Posterior cingulate gyrus (tissue), 11 donors: ENCODE measurements at regions of chr9 and their contacts with region 1.

Region 1: DNA sequence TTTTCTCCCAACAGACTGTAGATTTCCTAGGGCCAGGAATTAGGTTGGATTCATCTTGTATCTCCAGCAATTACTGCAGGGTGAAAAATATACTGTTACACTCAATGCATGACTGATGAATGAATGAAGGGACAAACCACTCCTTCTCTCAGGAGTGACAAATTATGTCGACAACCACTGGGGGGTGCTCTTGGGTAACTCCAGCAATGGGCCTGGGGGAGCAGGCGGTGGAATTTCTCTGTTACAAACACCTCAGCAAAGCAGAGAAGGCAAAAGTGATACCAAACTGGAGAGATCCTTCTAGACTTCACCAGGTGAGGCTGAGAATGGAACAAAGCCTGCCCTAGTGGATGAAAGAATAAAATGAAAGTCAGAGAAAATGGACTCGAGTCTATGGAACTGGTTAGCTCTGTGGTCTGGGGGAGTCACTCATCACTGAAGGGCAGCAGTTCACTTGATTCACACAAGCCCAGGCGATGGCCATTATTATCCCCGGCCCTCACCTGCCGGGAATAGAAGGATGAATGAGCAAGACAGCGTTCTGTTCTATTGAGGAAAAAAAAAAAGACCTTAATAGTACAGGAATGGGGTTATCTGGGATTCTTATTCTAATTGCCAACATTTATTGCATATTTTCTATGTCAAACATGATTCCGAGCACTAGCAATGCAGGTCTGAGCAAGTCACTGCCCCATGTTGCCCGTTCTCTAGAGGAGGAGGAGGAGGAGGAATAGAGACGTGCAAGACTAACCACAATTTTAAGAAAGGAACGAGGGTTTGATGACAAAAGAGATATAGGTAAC is 341.1 kb downstream of the ASTN2 start:
- DNase-seq: peak in 8 of 10 donors; percentile 60 to 90 (median 71)

Region 2: DNA sequence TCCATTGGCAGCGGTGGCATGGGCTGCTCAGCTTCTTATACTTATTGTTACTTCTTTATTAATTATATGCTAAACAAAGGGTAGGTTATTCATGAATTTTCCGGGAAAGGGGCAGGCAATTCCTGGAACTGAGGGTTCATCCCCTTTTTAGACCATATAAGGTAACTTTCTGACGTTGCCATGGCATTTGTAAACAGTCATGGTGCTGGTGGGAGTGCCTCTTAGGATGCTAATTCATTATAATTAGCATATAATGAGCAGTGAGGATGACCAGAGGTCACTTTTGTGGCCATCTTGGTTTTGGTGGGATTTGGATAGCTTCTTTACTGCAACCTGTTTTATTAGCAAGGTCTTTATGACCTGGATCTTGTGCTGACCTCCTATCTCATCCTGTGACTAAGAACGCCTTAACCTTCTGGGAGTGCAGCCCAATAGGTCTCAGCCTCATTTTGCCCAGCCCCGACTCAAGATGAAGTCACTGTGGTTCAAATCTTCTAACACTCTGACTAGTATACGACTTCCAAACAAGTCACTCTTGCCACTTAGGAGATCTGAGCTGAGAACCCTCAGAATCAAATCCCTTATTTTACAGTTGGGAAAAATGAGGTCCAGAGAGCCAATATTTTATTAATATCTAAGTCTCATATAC is 149.2 kb before region 1 on chr9:
- intact Hi-C with region 1: no loop called
- DNase-seq: no peak

Region 3: DNA sequence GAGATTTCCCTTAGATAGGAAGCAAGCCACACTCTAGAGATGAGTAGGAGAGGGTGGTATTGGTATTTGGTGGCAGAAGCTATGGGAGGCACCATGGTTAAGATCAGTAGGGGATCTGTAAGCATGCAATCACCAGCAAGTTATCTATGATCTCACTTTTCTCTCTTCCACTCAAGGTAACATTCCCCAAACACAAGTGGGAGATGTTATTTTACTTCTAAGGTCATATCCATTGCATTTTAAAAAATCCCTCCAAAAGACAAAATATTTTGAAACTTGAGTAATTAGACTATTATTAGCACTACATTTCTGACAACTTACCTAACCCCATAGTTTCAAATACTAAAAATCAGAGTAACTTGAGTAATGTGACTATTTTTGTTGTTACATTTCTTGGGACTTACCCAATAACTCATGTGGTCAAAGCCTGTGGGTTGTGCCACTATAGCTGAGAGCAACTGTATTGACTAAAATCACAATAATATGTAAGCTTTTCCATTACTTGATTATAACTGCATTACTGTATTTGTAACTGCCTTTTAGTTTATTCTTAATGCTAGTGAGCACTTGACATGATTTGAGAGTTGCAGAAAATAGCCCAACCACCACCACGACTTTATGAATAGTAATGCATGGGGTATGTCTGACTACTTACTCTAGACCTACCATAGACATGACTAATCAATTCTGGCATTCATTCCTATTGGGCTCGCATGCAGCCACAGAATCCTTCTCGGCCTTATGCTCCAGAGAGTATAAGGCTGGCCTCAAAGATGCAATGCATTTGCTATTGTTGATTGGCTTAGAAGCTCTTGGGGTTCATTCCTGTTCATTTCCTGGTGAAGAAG is 121.9 kb before region 1 on chr9:
- intact Hi-C with region 1: no loop called
- DNase-seq: no peak

Region 4: DNA sequence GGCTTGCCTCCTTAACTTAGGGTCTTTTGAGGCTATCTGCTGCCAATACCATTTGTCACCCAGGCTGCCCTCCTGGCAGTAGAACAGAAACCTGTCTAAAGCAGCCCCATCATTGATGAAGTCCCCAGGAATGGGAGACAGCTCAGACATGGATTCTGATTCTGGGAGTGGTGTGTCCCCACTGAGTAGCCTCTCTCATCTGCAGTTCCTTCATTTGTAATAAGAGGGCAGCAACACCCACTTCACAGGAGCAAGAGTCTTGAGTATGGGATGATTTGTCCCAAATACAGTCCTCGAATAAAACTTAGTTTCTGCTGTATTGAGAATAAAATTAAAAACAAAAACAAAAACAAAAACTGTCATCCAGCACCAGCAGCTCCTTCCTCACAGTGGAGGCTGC is 173.5 kb after region 1 on chr9:
- intact Hi-C with region 1: loop called (anchors 10 kb)
- DNase-seq: peak in 1 of 10 donors; percentile 18

Region 5: DNA sequence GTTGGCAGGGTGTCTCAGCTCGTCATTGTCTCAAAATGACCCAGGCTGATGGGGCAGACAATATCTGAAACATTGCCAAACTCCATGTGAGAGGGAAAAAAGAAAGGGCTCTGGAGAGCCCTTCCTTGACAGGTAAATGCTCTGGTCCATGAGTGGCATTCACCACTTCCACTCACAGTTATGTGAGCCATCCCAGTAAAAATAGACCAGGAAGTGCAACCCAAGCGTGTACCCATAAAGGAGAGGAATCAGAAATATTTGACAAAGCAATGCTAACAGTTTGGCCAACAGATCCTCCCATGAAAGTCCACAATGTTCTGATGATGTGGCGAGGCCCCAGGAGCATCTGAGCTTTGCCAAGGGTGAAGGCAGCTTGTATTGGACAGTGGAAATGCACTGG is 291.7 kb after region 1 on chr9:
- intact Hi-C with region 1: no loop called
- DNase-seq: no peak